Transverse colon (tissue), 4 donors: ENCODE measurements at regions of chr6 and their contacts with region 1.

Region 1: DNA sequence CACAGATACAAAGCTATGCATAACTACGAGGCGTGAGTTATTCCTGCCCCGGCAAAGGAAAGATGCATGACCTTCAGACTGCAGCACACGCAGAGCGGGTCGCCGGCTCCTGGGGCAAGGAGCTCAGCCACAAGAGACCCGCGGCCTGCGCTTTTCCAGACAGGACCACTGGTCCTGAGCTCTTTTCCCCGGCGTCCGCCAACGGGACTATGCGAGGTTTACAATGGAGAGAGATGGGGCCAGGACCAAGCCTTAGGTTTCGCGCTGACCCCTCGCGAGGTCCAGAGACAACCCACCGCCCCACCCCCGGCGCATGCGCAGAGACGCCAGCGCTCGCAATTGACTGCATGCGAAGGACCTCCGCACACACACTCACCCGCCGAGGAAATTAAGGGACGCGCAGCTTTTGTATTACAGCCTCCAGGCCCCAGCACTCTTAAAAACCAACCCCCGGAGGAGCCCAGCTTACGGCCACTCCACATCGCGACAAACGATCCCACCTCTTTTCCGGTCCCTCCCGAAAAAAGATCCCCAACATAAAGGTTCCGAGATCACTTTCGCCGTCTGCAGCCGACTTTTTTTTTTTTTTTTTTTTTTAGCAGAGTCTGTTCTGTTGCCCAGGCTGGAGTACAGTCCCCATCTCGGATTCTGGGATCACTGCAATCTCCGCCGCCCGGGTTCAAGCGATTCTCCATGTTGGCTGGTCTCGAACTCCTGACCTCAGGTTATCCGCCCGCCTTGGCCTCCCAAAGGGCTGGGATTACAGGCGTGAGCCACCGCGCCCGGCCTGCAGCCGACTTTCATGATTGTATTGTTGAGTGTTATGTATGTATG is at the start of gene COQ3:
- DNase-seq: peak; percentile 68
- H3K4me3 ChIP-seq: peak within 1 kb of the TSS; percentile 74 to 89 (median 78)
- H3K27ac ChIP-seq: peak within 1 kb of the TSS; percentile 83 to 88 (median 86)
- H3K4me1 ChIP-seq: peaks cover 0 to 10% (median 1%) of the 10 kb centered on the region in 4 donors
- H3K27me3 ChIP-seq: no peaks in the 10 kb centered on the region
- CTCF ChIP-seq: no peak
- EP300 ChIP-seq: no peak
- POLR2A ChIP-seq: peak; percentile 25
- total RNA-seq, gene COQ3: 4.9 to 5.1 TPM in 2 of 4 donors, not detected in the others

Region 2: DNA sequence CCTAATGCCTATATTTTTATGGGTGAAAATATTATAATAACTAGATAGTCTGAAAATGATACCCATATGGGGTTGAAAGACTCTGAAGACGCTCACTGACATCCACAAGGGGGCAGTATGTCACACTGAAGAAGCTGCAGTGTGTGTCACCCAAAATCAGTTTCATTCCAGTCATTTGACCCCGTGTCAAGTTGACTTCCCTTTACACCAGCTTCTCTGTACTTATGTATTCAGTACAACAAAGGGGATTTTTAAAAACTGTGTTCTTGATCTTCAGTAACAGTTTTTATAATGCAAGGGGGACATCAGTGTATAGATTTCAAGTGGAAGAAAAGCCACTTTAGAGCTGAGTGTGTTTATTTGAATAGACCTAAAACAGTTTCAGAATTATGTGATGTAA is 63.8 kb before region 1 on chr6:
- in situ Hi-C with region 1: no loop called
- intact Hi-C with region 1: loop called (anchors 10 kb)
- DNase-seq: peak; percentile 57
- H3K4me3 ChIP-seq: no peak overlapping the region
- H3K27ac ChIP-seq: no peak overlapping the region
- H3K4me1 ChIP-seq: peaks cover 0 to 4% (median 0%) of the 10 kb centered on the region in 4 donors
- H3K27me3 ChIP-seq: no peaks in the 10 kb centered on the region
- CTCF ChIP-seq: peak; percentile 51 to 73 (median 72)
- EP300 ChIP-seq: no peak
- POLR2A ChIP-seq: no peak

Region 3: GRCh38 chr6:100412872-100413271 is 1019.0 kb after region 1 on chr6:
- in situ Hi-C with region 1: no loop called
- intact Hi-C with region 1: loop called (anchors 5 kb)
- DNase-seq: no peak
- H3K4me3 ChIP-seq: no peak overlapping the region
- H3K27ac ChIP-seq: no peak overlapping the region
- H3K4me1 ChIP-seq: no peaks in the 10 kb centered on the region
- H3K27me3 ChIP-seq: peaks cover 5% of the 10 kb centered on the region
- CTCF ChIP-seq: no peak
- EP300 ChIP-seq: no peak
- POLR2A ChIP-seq: no peak